Activated CD4-positive, alpha-beta T cell treated with anti-CD3 and anti-CD28 coated beads for 36 hours (primary cell): ENCODE measurements at regions of chr19 and their contacts with region 1.

Region 1: DNA sequence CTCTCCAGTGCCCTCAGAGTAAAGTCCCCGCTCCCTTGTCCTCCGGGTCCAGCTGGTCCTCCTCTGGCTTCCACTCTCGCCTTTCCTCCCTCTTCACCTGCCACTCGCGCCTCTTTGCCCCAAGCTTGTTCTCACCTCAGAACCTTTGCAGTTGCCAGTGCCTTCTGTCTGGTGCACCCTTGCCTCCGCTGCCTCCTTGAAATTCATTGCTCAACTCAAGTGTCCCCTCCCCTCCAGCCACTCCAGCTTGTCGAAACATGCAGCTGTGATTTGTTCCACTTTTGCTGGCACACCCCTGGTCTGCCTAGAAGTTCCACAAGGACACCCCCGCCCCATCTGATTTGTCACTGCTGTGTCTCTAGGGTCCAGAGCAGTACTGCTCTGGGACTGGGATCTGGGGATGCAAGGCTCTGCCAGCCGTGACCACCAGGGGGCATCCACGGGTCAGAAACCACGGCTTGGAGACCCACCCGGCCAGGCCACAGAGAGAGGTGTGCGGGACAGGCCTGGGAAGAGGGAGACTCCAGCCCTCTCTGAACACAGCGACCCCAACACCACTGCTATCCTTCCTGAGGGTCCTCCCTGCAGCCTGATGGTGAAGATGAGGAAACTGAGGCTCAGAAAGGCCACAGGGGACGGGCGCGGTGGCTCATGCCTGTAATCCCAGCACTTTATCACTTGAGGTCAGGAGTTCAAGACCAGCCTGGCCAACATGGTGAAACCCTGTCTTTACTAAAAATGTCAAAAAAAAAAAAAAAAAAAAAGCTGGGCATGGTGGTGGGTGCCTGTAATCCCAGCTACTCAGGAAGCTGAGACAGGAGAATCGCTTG is 49.9 kb downstream of the AP1M1 start:
- DNase-seq: peak; percentile 91
- ATAC-seq: peak; percentile 96
- H3K4me3 Mint-ChIP-seq: no peak overlapping the region
- H3K27ac Mint-ChIP-seq: no peak overlapping the region
- H3K4me1 Mint-ChIP-seq: peaks cover 13% of the 10 kb centered on the region
- H3K27me3 Mint-ChIP-seq: no peaks in the 10 kb centered on the region

Region 2: DNA sequence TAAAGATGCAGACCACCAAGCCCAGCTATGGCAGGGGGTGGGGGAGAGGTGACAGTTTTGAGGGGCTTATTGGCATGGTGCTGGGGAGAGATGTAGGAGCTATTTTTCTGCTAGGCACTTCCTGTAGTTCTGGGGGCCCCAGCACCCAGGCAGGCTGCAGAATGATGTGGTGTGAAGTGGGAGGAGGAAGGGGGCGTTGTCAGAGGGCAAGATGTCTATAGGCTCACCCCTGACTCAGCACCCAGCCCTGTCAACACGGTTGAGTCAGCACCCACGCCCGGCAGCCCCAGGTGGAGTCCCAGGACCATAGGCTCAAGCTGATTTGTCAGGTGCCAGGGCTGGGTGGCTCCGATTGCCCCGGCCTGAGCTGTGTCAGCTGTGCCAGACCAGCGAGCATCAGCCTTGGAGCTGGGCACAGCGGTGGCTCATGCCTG is 82.8 kb after region 1 on chr19:
- CTCF ChIA-PET with region 1: interaction called, 20 read pairs
- POLR2A ChIA-PET with region 1: no interaction called
- intact Hi-C with region 1: loop called (anchors 2 to 5 kb)
- DNase-seq: peak; percentile 98
- ATAC-seq: peak; percentile 90
- H3K4me3 Mint-ChIP-seq: peak overlapping the region; percentile 33
- H3K27ac Mint-ChIP-seq: peak overlapping the region; percentile 17
- H3K4me1 Mint-ChIP-seq: peaks cover 62% of the 10 kb centered on the region
- H3K27me3 Mint-ChIP-seq: peaks cover 28% of the 10 kb centered on the region

Region 3: GRCh38 chr19:16371540-16371986 is 124.0 kb after region 1 on chr19:
- CTCF ChIA-PET with region 1: interaction called, 12 read pairs
- POLR2A ChIA-PET with region 1: no interaction called
- intact Hi-C with region 1: no loop called
- DNase-seq: peak; percentile 92
- ATAC-seq: peak; percentile 82
- H3K4me3 Mint-ChIP-seq: peak overlapping the region; percentile 22
- H3K27ac Mint-ChIP-seq: peak overlapping the region; percentile 76
- H3K4me1 Mint-ChIP-seq: peaks cover 46% of the 10 kb centered on the region
- H3K27me3 Mint-ChIP-seq: peaks cover 14% of the 10 kb centered on the region

Region 4: GRCh38 chr19:16394681-16395375 is 147.3 kb after region 1 on chr19:
- CTCF ChIA-PET with region 1: interaction called, 10 read pairs
- POLR2A ChIA-PET with region 1: no interaction called
- intact Hi-C with region 1: no loop called
- DNase-seq: no peak
- ATAC-seq: no peak
- H3K4me3 Mint-ChIP-seq: no peak overlapping the region
- H3K27ac Mint-ChIP-seq: no peak overlapping the region
- H3K4me1 Mint-ChIP-seq: peaks cover 2% of the 10 kb centered on the region
- H3K27me3 Mint-ChIP-seq: no peaks in the 10 kb centered on the region

Region 5: GRCh38 chr19:16417660-16418596 is 170.4 kb after region 1 on chr19:
- CTCF ChIA-PET with region 1: interaction called, 7 read pairs
- POLR2A ChIA-PET with region 1: no interaction called
- intact Hi-C with region 1: loop called in 1 of 2 experiments (anchors 1 kb)
- DNase-seq: peak; percentile 79
- ATAC-seq: peak; percentile 97
- H3K4me3 Mint-ChIP-seq: no peak overlapping the region
- H3K27ac Mint-ChIP-seq: no peak overlapping the region
- H3K4me1 Mint-ChIP-seq: peaks cover 4% of the 10 kb centered on the region
- H3K27me3 Mint-ChIP-seq: no peaks in the 10 kb centered on the region

Region 6: GRCh38 chr19:16829010-16829821 is 581.6 kb after region 1 on chr19 and contains the start of gene SIN3B:
- CTCF ChIA-PET with region 1: no interaction called
- POLR2A ChIA-PET with region 1: no interaction called
- intact Hi-C with region 1: no loop called
- DNase-seq: peak; percentile 93
- ATAC-seq: peak; percentile 91
- H3K4me3 Mint-ChIP-seq: peak within 1 kb of the TSS; percentile 79
- H3K27ac Mint-ChIP-seq: peak within 1 kb of the TSS; percentile 82
- H3K4me1 Mint-ChIP-seq: peaks cover 38% of the 10 kb centered on the region
- H3K27me3 Mint-ChIP-seq: peaks cover 20% of the 10 kb centered on the region
- total RNA-seq, gene SIN3B: 27.6 to 28.5 TPM

Region 7: GRCh38 chr19:17052439-17053210 is 805.1 kb after region 1 on chr19:
- CTCF ChIA-PET with region 1: no interaction called
- POLR2A ChIA-PET with region 1: no interaction called
- intact Hi-C with region 1: no loop called
- DNase-seq: peak; percentile 37
- ATAC-seq: peak; percentile 30
- H3K4me3 Mint-ChIP-seq: no peak overlapping the region
- H3K27ac Mint-ChIP-seq: no peak overlapping the region
- H3K4me1 Mint-ChIP-seq: no peaks in the 10 kb centered on the region
- H3K27me3 Mint-ChIP-seq: no peaks in the 10 kb centered on the region